Activated CD4-positive, alpha-beta T cell treated with anti-CD3 and anti-CD28 coated beads for 36 hours (primary cell): ENCODE measurements at regions of chr10 and their contacts with region 1.

Region 1: GRCh38 chr10:128078136-128078969 is 47.9 kb downstream of the MKI67 start:
- DNase-seq: peak; percentile 65
- ATAC-seq: peak; percentile 86
- H3K4me3 Mint-ChIP-seq: no peak overlapping the region
- H3K27ac Mint-ChIP-seq: no peak overlapping the region
- H3K4me1 Mint-ChIP-seq: no peaks in the 10 kb centered on the region
- H3K27me3 Mint-ChIP-seq: no peaks in the 10 kb centered on the region

Region 2: DNA sequence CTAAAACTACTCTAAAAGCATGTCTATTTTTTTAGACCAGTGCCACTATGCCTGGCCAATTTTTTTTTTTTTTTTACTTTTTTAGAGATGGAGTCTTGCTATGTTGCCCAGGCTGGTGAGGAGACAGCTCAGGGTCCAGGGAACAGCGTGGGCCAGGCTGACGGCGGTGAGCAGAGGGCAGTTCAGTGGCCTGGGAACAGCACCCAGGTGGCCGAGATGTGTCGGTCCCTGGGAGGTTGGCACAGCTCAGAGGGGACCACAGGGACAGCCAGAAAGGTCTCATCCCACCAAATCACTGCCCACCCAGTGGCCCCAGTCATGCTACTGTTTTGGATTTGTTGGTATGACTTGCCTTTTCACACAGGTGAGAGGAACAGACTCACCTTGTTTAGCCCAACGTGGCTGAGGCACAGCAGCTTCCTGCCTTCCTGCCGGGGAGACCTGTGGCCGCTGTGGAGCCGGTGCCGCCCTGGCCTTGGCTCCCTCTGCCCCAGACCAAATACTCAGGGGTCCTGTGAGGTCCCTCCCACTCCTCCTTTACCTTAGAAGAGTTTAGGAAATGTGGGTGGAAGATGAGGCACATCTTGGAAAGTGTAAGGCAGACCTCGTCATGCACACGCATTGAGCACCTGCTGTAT is 61.8 kb before region 1 on chr10:
- CTCF ChIA-PET with region 1: interaction called, 4 read pairs
- POLR2A ChIA-PET with region 1: interaction called, 12 read pairs
- intact Hi-C with region 1: no loop called
- DNase-seq: no peak
- ATAC-seq: no peak
- H3K4me3 Mint-ChIP-seq: no peak overlapping the region
- H3K27ac Mint-ChIP-seq: no peak overlapping the region
- H3K4me1 Mint-ChIP-seq: peaks cover 11% of the 10 kb centered on the region
- H3K27me3 Mint-ChIP-seq: peaks cover 2% of the 10 kb centered on the region